ENCODE measurements at regions of chr2 and their contacts with region 1.

Region 1: DNA sequence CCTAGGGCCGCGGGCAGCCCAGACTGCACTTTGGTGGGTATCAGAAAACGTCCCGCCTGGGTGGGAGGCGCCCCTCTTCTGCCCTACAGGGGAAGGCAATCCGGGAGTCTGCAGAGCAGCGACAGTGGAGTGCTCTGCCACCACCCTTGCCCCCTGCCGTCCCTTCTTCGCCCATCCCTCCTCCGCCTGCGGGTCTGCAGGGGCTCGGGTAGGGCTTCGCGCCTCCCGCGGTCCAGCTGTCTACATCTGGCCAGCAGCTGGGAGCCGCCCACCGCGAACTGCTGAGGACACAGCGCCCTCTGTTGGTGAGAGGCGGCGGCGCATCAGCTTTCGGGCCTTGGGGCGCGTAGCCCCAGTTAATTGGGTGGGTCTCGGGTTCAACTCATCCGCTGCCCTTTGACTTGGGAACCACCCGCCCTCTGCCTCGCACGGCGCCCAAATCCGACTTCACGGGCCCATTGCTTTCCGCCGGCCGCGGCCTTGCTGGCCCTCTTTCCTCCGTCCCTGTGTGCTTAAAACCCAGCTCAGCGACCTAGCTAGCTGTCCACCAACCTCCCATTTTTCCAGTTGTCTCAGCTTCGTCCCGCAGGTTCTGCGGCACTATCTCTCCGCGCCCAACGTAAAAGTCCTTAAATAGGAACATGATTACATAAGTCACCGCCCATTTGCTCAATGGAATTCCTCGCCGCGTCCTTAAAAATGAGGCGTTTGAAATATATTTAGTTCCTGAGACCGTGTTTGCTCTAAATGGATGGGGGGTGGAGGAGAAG is 17.6 kb downstream of the WNT10A start:
- DNase-seq: peak; percentile 82
- H3K4me3 Mint-ChIP-seq: peak overlapping the region; percentile 44
- H3K27ac Mint-ChIP-seq: no peak overlapping the region
- H3K4me1 Mint-ChIP-seq: peaks cover 40% of the 10 kb centered on the region
- H3K27me3 Mint-ChIP-seq: peaks cover 92% of the 10 kb centered on the region

Region 2: DNA sequence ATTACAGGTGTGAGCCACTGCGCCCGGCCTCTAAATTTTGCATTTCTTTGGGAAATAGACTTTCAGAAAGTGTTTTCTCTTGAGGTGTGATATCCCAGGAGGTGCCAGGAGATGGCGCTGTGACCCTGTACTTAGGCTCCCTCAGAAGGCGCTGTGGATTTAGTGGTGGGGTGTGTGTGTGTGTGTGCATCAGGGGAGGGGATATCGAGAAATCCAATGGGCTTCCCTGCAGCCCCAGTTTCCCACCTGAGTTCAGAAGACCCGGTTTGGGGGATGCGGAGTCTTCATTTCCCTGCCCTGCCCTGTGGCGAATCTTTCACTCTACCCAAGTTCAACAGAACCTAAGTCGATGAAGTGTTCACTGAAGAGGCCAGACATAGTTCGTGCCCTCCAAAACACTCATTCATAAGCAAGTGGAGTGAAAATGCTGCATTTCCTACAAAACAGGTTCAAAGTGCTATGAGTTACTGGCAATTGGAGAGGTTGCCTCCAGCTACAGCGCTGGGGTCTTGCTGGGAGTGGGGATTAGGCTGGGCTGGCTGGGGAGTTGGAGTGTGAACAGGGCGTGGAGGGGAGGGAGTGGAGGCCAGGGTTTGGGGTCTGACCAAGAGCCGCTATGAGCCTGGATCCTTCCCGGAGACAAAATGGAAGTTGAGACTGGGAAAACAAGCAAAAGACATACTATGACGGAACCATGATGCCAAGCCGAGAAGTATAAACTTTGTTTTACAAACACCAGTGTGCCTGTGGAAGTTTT is 45.2 kb before region 1 on chr2:
- CTCF ChIA-PET with region 1: interaction called, 44 read pairs
- DNase-seq: peak; percentile 72
- H3K4me3 Mint-ChIP-seq: no peak overlapping the region
- H3K27ac Mint-ChIP-seq: no peak overlapping the region
- H3K4me1 Mint-ChIP-seq: no peaks in the 10 kb centered on the region
- H3K27me3 Mint-ChIP-seq: peaks cover 83% of the 10 kb centered on the region

Region 3: DNA sequence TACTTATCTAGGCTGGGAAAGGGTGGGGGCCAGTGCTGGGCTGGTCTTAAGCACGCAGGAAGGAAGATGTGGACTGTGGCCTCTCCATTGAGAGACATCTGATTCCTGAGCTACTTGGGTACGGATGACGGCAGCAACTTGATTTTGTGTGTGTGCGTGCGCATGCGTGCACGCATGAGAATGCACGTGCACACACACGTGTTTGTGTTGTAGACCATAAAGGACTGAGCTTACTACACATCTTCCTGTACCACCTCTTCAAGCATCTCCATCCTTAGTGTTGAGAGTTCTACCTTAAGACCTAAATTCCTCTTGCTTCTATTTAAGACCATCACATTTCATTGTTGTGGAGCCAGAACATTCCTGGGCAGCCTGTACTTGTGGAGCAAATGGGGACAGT is 29.2 kb before region 1 on chr2:
- CTCF ChIA-PET with region 1: interaction called, 443 read pairs
- DNase-seq: no peak
- H3K4me3 Mint-ChIP-seq: no peak overlapping the region
- H3K27ac Mint-ChIP-seq: no peak overlapping the region
- H3K4me1 Mint-ChIP-seq: peaks cover 12% of the 10 kb centered on the region
- H3K27me3 Mint-ChIP-seq: peaks cover 96% of the 10 kb centered on the region

Region 4: DNA sequence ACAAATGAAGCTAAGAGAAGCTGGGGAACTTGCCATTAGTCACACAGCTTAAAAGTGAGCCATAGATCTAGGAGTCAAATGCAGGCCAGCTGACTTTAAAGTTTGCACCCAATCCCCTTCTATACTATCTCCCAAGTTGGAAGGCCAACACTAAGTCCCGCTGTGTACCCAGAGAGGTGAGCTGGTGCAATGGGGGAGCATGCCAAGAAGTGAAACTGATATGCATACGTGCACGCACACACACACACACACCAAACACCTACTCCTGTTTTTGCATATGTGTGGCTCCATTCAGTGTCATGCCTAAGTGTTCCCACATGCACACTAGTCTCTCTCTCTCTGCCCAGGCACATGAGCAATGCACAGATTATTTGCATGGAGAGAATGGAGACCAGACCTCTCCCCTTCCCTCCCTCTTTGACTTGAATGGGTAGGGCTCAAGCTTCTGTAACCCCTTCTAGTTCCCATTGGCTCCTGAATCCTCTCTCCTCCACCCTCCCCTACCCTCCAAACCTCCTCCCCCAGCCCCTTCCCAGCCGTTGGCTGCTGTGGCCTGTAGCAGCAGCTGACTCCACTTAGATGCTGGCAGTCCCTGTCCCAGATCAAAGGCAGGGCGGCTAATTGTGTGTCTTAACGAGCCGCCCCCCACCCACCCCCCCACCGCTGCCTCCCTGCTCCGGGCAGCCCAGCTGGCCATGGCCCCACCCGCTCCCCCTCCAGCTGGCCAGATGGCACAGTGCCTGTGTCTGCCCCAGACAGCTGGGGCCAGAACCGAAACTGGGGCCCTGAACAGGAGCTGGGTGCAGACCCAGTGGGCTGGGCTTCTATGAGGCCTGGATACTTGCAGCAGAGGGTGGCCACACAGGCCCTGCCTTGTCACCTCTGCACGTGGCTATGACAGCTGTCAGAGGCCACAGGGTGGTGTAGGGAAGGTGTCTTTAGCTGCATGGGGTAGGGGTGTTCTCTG is 12.0 kb before region 1 on chr2:
- CTCF ChIA-PET with region 1: interaction called, 443 read pairs
- DNase-seq: no peak
- H3K4me3 Mint-ChIP-seq: no peak overlapping the region
- H3K27ac Mint-ChIP-seq: no peak overlapping the region
- H3K4me1 Mint-ChIP-seq: peaks cover 2% of the 10 kb centered on the region
- H3K27me3 Mint-ChIP-seq: peaks cover 96% of the 10 kb centered on the region

Region 5: GRCh38 chr2:218979846-218980734 is 81.8 kb after region 1 on chr2:
- CTCF ChIA-PET with region 1: interaction called, 10 read pairs
- DNase-seq: peak; percentile 87
- H3K4me3 Mint-ChIP-seq: peak overlapping the region; percentile 50
- H3K27ac Mint-ChIP-seq: no peak overlapping the region
- H3K4me1 Mint-ChIP-seq: peaks cover 26% of the 10 kb centered on the region
- H3K27me3 Mint-ChIP-seq: peaks cover 92% of the 10 kb centered on the region